ENCODE measurements at regions of chr17 and their contacts with region 1.

Region 1: GRCh38 chr17:76408052-76408849 is 23.8 kb downstream of the SPHK1 start:
- DNase-seq: peak in 1 of 2 experiments; percentile 88
- H3K4me3 ChIP-seq: no peak overlapping the region
- H3K27ac ChIP-seq: no peak overlapping the region
- H3K4me1 ChIP-seq: no peaks in the 10 kb centered on the region; a peak in 2 of 7 replicates
- H3K27me3 ChIP-seq: no peaks in the 10 kb centered on the region
- CTCF ChIP-seq: peak; percentile 83 to 88 (median 87)
- EP300 ChIP-seq: no peak
- POLR2A ChIP-seq: no peak
- RAD21 ChIP-seq: peak; percentile 80 to 83

Region 2: DNA sequence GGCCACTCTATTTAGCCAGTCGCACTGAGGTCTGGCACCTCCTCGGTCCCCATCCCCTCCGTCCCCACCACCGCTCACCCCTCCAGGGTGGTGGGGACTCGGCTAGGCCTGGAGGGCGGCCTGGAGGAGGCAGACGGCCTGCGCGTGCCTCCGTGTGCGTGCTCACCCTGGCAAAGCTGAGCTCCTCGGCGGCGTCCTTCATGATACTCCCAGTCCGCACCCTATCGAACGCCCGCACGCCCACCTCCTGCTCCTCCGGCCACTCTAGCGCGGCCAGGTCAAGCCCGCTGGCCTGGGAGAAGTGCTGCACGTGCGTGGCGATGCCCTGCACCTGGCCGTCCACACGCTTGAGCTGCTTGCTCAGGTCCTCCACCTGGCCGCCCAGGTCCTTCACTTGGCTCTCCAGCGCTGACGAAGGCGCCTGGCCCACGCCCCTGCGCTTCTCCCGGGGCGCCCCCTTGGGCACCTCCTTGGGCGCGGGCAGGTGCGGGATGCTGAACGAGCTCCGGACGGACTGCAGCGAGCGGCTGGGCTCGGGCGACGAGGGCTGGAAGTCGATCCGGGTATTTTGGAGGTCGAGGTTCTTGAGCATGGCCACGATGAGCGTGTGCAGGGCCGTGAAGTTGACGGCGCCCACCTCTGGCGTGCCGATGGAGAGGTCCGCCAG is 100.8 kb before region 1 on chr17:
- CTCF ChIA-PET with region 1: interaction called, 10 read pairs
- POLR2A ChIA-PET with region 1: no interaction called
- DNase-seq: no peak
- H3K4me3 ChIP-seq: no peak overlapping the region
- H3K27ac ChIP-seq: no peak overlapping the region
- H3K4me1 ChIP-seq: no peaks in the 10 kb centered on the region
- H3K27me3 ChIP-seq: no peaks in the 10 kb centered on the region
- CTCF ChIP-seq: no peak
- EP300 ChIP-seq: no peak
- POLR2A ChIP-seq: no peak
- RAD21 ChIP-seq: no peak

Region 3: DNA sequence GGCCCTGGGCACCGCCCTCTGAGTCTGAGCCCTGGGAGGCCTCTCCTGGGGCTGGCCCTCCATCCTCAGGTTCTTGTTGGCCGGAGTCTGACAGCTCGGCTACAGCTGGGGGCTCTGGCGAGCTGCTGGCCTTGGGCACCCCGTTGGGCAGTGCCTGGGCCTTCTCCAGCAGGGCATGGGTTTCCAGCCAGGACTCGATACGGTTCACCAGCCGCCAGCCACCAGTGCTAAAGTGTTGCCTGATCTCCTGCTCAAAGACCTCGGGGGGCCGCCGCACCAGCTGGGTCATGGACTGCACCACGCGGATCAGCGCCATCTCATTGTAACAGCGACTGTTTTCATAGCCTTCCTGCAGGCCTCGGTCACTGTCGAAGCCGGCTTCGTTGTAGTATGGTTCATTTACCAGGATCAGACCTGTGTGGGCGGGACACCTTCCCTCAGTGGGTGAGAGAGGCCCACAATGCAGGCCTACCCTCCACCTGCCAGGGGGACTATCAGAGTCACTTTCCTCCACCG is 17.0 kb before region 1 on chr17:
- CTCF ChIA-PET with region 1: interaction called, 84 read pairs
- POLR2A ChIA-PET with region 1: no interaction called
- DNase-seq: no peak
- H3K4me3 ChIP-seq: no peak overlapping the region
- H3K27ac ChIP-seq: no peak overlapping the region
- H3K4me1 ChIP-seq: peaks cover 5 to 18% (median 12%) of the 10 kb centered on the region in 4 experiments
- H3K27me3 ChIP-seq: peaks cover 0 to 10% (median 1%) of the 10 kb centered on the region in 4 experiments; a peak in 3 of 7 replicates
- CTCF ChIP-seq: no peak
- EP300 ChIP-seq: no peak
- POLR2A ChIP-seq: no peak
- RAD21 ChIP-seq: no peak

Region 4: DNA sequence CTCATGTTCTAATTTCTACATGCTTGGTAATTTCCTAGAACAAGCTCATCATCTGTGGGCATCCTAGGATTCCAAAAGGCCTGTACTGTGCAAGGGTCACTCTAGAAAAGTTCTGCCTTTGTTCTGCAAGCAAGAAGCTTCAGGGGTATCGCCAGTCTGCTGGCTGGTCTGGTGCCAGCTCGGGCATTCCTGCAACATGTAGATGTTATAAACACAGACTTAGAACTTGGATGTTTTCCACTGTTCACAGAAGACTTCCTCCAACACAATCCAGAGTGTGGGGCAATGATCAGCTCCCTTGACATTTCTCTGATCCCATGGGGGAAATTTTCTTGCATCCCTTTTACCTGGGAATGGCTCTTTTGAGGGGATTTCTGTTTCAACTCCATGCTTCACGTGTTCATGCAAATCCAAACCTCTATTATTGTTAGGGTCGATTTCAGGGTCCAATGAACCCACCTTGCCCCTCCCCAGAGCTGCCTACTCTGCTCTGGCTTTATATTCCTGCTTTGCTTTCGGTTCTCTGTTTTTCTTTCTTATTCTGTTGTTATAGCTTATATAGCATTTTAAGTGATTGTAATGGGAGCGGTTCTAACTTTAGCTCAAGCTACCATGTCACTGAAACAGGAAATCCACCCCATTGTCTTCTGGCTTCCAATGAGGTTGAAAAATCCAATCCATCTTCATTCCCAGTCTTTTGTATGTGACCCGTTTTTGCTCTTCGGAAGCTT is 19.4 kb after region 1 on chr17:
- CTCF ChIA-PET with region 1: interaction called, 11 read pairs
- POLR2A ChIA-PET with region 1: interaction called, 3 read pairs
- DNase-seq: no peak
- H3K4me3 ChIP-seq: no peak overlapping the region
- H3K27ac ChIP-seq: no peak overlapping the region
- H3K4me1 ChIP-seq: peaks cover 0 to 22% (median 6%) of the 10 kb centered on the region in 4 experiments; a peak in 6 of 7 replicates
- H3K27me3 ChIP-seq: no peaks in the 10 kb centered on the region
- CTCF ChIP-seq: no peak
- EP300 ChIP-seq: no peak
- POLR2A ChIP-seq: no peak
- RAD21 ChIP-seq: no peak

Region 5: GRCh38 chr17:76446449-76447231 is 38.4 kb after region 1 on chr17:
- CTCF ChIA-PET with region 1: interaction called, 16 read pairs
- POLR2A ChIA-PET with region 1: interaction called, 3 read pairs
- DNase-seq: no peak
- H3K4me3 ChIP-seq: peak overlapping the region in 1 of 4 experiments; percentile 31; a peak in 3 of 8 replicates
- H3K27ac ChIP-seq: no peak overlapping the region
- H3K4me1 ChIP-seq: peaks cover 33 to 63% (median 58%) of the 10 kb centered on the region in 4 experiments
- H3K27me3 ChIP-seq: no peaks in the 10 kb centered on the region
- CTCF ChIP-seq: no peak
- EP300 ChIP-seq: no peak
- POLR2A ChIP-seq: no peak
- RAD21 ChIP-seq: no peak

Measured in H1 (cell line).